K562 (cell line): ENCODE measurements at regions of chr12 and their contacts with region 1.

Region 1: GRCh38 chr12:120538281-120539156 is 4.4 kb downstream of the RNF10 start:
- DNase-seq: peak in 2 of 4 experiments; percentile 17 to 34
- ATAC-seq: no peak
- H3K4me3 ChIP-seq: no peak overlapping the region
- H3K27ac ChIP-seq: no peak overlapping the region
- H3K4me1 ChIP-seq: peaks cover 37 to 49% of the 10 kb centered on the region in 2 experiments
- H3K27me3 ChIP-seq: no peaks in the 10 kb centered on the region
- CTCF ChIP-seq: no peak
- EP300 ChIP-seq: no peak
- POLR2A ChIP-seq: no peak
- RAD21 ChIP-seq: no peak

Region 2: GRCh38 chr12:120388691-120389481 is 149.6 kb before region 1 on chr12:
- CTCF ChIA-PET with region 1: no interaction called
- POLR2A ChIA-PET with region 1: no interaction called
- in situ Hi-C with region 1: no loop called
- intact Hi-C with region 1: no loop called
- DNase-seq: no peak
- ATAC-seq: no peak
- H3K4me3 ChIP-seq: no peak overlapping the region
- H3K27ac ChIP-seq: no peak overlapping the region
- H3K4me1 ChIP-seq: peaks cover 0 to 6% of the 10 kb centered on the region in 2 experiments; a peak in 2 of 5 replicates
- H3K27me3 ChIP-seq: peaks cover 6 to 29% of the 10 kb centered on the region in 2 experiments
- CTCF ChIP-seq: no peak
- EP300 ChIP-seq: no peak
- POLR2A ChIP-seq: no peak
- RAD21 ChIP-seq: no peak

Region 3: GRCh38 chr12:120495723-120496412 is 42.7 kb before region 1 on chr12 and contains the start of gene DYNLL1:
- CTCF ChIA-PET with region 1: no interaction called
- POLR2A ChIA-PET with region 1: interaction called, 7 read pairs
- in situ Hi-C with region 1: no loop called
- intact Hi-C with region 1: loop called (anchors 2 kb)
- DNase-seq: peak; percentile 94 to 98 (median 96)
- ATAC-seq: peak; percentile 98
- H3K4me3 ChIP-seq: peak within 1 kb of the TSS; percentile 97
- H3K27ac ChIP-seq: peak within 1 kb of the TSS; percentile 86
- H3K4me1 ChIP-seq: peaks cover 2 to 15% of the 10 kb centered on the region in 2 experiments; a peak in 3 of 5 replicates
- H3K27me3 ChIP-seq: no peaks in the 10 kb centered on the region
- CTCF ChIP-seq: peak in 1 of 3 experiments; percentile 4; a peak in 1 of 6 replicates
- EP300 ChIP-seq: peak; percentile 17; the same call in 1 of the 2 replicates
- POLR2A ChIP-seq: peak; percentile 94
- RAD21 ChIP-seq: no peak
- polyA plus RNA-seq, gene DYNLL1: 921 to 1,112 TPM

Region 4: GRCh38 chr12:120741476-120742421 is 203.2 kb after region 1 on chr12:
- CTCF ChIA-PET with region 1: no interaction called
- POLR2A ChIA-PET with region 1: no interaction called
- in situ Hi-C with region 1: no loop called
- intact Hi-C with region 1: no loop called
- DNase-seq: no peak
- ATAC-seq: no peak
- H3K4me3 ChIP-seq: no peak overlapping the region
- H3K27ac ChIP-seq: no peak overlapping the region
- H3K4me1 ChIP-seq: peaks cover 0 to 16% of the 10 kb centered on the region in 2 experiments; a peak in 2 of 5 replicates
- H3K27me3 ChIP-seq: no peaks in the 10 kb centered on the region
- CTCF ChIP-seq: no peak
- EP300 ChIP-seq: no peak
- POLR2A ChIP-seq: no peak
- RAD21 ChIP-seq: no peak

Region 5: DNA sequence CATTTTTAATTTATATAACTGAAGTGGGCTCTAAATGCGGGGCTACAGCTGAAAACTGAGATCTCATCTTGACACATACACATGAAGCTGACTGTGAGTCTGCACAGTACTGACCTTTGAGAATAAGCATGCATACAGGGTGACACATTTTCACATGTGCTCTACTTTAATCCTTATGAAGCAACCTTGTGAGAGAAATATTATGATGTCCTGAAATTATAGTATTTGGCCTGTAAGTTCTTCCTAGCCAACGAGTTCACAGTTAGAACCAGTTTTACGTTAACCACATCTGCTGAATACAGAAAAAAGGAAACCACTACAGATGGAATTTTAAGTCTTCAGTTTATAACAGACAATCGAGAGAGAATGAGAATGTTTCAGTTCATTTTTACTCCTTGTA is 295.3 kb after region 1 on chr12:
- CTCF ChIA-PET with region 1: no interaction called
- POLR2A ChIA-PET with region 1: no interaction called
- in situ Hi-C with region 1: no loop called
- intact Hi-C with region 1: no loop called
- DNase-seq: no peak
- ATAC-seq: no peak
- H3K4me3 ChIP-seq: no peak overlapping the region
- H3K27ac ChIP-seq: no peak overlapping the region
- H3K4me1 ChIP-seq: peaks cover 5 to 13% of the 10 kb centered on the region in 2 experiments; a peak in 3 of 5 replicates
- H3K27me3 ChIP-seq: no peaks in the 10 kb centered on the region
- CTCF ChIP-seq: no peak
- EP300 ChIP-seq: no peak
- POLR2A ChIP-seq: no peak
- RAD21 ChIP-seq: no peak